ENCODE measurements at regions of chr20 and their contacts with region 1.

Region 1: GRCh38 chr20:33575282-33575681 is 85.4 kb downstream of the CBFA2T2 start:
- DNase-seq: no peak
- H3K4me3 ChIP-seq: no peak overlapping the region
- H3K27ac ChIP-seq: no peak overlapping the region
- H3K4me1 ChIP-seq: no peaks in the 10 kb centered on the region
- H3K27me3 ChIP-seq: no peaks in the 10 kb centered on the region
- CTCF ChIP-seq: no peak

Region 2: GRCh38 chr20:33521461-33521860 is 53.8 kb before region 1 on chr20:
- CTCF ChIA-PET with region 1: no interaction called
- POLR2A ChIA-PET with region 1: interaction called, 11 read pairs
- intact Hi-C with region 1: no loop called
- DNase-seq: no peak
- H3K4me3 ChIP-seq: no peak overlapping the region
- H3K27ac ChIP-seq: no peak overlapping the region
- H3K4me1 ChIP-seq: peaks cover 27% of the 10 kb centered on the region
- H3K27me3 ChIP-seq: no peaks in the 10 kb centered on the region
- CTCF ChIP-seq: no peak

Region 3: DNA sequence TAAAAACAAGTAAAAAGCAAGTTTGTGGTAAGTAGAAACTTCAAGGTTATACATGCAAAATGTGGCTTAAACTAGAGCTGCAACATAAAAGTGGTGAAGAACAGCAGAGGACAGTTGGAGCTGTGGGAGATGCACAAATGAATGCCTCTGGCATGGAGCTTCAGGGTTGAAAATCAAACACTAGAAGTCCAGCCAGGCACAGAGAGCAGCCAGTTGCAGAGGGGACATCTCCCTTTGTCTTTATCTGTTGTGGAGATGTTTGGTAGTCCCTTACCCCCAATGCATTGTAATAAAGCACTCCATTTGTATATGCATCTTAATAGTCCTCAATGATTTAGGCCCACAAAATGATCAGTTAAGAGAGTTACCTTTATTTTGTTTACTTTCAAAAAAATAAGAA is 13.8 kb after region 1 on chr20:
- CTCF ChIA-PET with region 1: no interaction called
- POLR2A ChIA-PET with region 1: no interaction called
- intact Hi-C with region 1: no loop called
- DNase-seq: no peak
- H3K4me3 ChIP-seq: no peak overlapping the region
- H3K27ac ChIP-seq: no peak overlapping the region
- H3K4me1 ChIP-seq: 0 out of 2 replicates have a peak, but pooled peaks cover 4% of the 10 kb centered on the region
- H3K27me3 ChIP-seq: no peaks in the 10 kb centered on the region
- CTCF ChIP-seq: no peak

Region 4: DNA sequence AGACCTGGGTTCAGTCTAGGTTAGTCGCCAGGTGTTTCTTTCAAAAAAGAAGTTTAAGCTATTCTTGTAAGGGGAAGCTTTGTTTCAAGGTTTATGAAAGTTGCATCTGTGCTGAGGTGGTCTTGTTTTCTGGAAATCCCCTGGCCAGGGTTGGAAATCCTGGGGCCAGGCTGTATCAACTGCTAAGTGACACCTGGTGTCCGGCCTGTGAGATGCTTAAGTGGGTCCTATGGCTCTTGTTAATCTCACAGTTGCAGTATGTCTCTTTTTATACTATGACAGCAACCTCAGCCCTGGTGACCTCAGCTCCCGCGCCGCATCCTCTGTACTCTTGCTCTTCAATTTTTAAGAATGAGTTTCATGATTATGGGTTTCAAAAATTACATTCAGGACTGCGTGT is 307.9 kb after region 1 on chr20:
- CTCF ChIA-PET with region 1: no interaction called
- POLR2A ChIA-PET with region 1: no interaction called
- intact Hi-C with region 1: no loop called
- DNase-seq: no peak
- H3K4me3 ChIP-seq: no peak overlapping the region
- H3K27ac ChIP-seq: no peak overlapping the region
- H3K4me1 ChIP-seq: peaks cover 7% of the 10 kb centered on the region; the same call in 1 of the 2 replicates
- H3K27me3 ChIP-seq: no peaks in the 10 kb centered on the region
- CTCF ChIP-seq: no peak

Region 5: DNA sequence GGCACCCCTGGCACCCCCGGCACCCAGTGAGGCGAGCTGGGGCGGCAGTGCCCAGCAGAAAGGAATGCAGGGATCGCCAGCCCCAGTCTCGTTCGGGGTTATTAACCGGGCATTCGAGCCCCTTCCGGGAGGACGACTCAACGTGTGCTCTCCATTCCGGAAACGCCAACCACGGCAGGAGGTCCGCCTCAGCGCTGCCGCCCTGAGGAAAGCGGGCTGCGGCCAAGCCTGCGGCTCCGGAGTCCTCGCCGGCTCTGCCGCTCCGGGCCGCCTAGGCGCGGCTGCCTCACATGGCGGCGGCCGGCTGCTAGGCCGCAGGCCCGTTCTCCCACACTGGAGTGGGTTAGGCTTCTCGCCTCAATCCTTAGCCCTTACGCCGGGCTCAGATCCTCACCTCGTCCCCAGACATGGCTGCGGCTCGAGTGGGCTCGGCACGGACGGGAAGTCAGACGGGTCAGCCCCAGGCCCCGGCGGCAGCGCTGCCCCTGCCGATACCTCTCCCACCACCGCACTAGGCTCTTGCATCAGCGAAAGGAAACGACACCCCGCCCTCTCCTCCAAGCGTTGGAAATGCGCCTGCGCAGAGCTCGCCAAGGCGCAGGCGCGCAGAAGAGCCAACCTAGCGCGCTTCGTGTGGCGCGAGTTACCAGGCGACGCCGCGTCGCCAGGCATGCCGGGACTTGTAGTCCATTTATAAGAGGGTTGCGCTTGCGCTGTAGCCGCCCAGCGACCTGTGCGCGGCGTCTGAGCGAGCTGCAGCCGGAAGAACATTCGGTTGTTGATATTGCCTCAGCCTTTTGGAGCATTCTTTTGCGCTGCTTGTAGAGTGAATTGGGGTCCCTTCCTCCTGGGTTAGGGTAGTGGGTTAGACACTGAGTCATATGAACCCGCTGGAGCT is 536.7 kb after region 1 on chr20 and contains the start of gene EIF2S2:
- CTCF ChIA-PET with region 1: no interaction called
- POLR2A ChIA-PET with region 1: no interaction called
- intact Hi-C with region 1: no loop called
- DNase-seq: peak; percentile 96 to 98
- H3K4me3 ChIP-seq: peak within 1 kb of the TSS; percentile 78
- H3K27ac ChIP-seq: peak within 1 kb of the TSS; percentile 92
- H3K4me1 ChIP-seq: peaks cover 27% of the 10 kb centered on the region
- H3K27me3 ChIP-seq: no peaks in the 10 kb centered on the region
- CTCF ChIP-seq: no peak
- total RNA-seq, gene EIF2S2: 129 and 162 TPM in 2 replicates